Activated CD4-positive, alpha-beta T cell treated with anti-CD3 and anti-CD28 coated beads, Interleukin-2, amount 10 ng/mL, durations not matched to agents 24 days and 14 days (primary cell): ENCODE measurements at regions of chr10 and their contacts with region 1.

Region 1: GRCh38 chr10:112183329-112184051 is at the start of gene GPAM:
- DNase-seq: peak; percentile 100
- H3K4me3 Mint-ChIP-seq: peak within 1 kb of the TSS; percentile 88
- H3K27ac Mint-ChIP-seq: peak within 1 kb of the TSS; percentile 88
- H3K4me1 Mint-ChIP-seq: peaks cover 26% of the 10 kb centered on the region
- H3K27me3 Mint-ChIP-seq: peaks cover 11% of the 10 kb centered on the region
- total RNA-seq, gene GPAM: 8.6 and 9.8 TPM in 2 replicates

Region 2: GRCh38 chr10:112045938-112046337 is 137.6 kb before region 1 on chr10:
- intact Hi-C with region 1: no loop called
- DNase-seq: no peak
- H3K4me3 Mint-ChIP-seq: no peak overlapping the region
- H3K27ac Mint-ChIP-seq: no peak overlapping the region
- H3K4me1 Mint-ChIP-seq: no peaks in the 10 kb centered on the region
- H3K27me3 Mint-ChIP-seq: no peaks in the 10 kb centered on the region

Region 3: DNA sequence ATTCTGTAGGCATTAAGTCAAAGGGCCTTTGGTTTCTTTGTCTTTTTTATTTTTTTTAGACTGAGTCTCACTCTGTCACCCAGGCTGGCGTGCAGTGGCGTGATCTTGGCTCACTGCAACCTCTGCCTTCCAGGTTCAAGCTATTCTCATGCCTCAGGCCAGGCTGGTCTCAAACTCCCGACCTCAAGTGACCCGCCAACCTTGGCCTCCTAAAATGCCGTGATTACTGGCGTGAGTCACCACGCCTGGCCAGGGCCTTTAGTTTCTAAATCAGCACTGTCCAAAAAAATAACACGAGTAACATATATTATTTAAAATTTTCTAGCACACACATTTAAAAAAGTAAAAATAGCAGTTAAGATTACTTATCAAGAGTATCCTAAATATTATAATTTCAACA is 179.3 kb after region 1 on chr10:
- intact Hi-C with region 1: no loop called
- DNase-seq: no peak
- H3K4me3 Mint-ChIP-seq: no peak overlapping the region
- H3K27ac Mint-ChIP-seq: no peak overlapping the region
- H3K4me1 Mint-ChIP-seq: no peaks in the 10 kb centered on the region
- H3K27me3 Mint-ChIP-seq: peaks cover 9% of the 10 kb centered on the region

Region 4: DNA sequence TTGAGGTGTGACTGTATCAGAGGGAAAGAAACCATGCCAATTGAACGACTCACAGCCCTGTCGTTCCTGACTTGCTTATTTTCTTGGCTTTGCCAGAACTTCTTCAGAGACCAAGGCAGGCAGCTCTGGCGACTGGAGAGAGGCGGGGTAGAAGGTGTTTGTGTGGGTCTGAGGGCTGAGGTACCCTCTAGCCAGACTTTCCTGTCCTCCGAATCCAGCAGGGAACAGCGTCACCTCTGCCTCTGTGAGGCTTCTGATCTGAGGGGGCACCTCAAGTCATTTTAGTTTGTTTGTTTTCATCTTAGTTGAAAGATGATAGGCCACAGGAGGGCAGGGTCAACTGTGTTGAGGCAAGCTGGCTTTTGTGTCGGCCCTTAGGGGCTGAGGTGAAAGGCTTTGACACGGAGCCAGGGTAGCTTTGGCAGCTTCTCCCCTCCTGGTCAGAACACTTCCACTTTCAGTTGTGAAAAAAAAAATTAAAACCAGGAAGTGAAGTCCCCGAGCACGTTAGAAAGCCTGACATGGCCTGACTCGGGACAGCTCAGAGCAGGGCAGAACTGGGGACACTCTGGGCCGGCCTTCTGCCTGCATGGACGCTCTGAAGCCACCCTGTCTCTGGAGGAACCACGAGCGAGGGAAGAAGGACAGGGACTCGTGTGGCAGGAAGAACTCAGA is 192.4 kb after region 1 on chr10:
- intact Hi-C with region 1: loop called (anchors 2 kb)
- DNase-seq: peak; percentile 88
- H3K4me3 Mint-ChIP-seq: peak overlapping the region; percentile 100
- H3K27ac Mint-ChIP-seq: peak overlapping the region; percentile 100
- H3K4me1 Mint-ChIP-seq: peaks cover 52% of the 10 kb centered on the region
- H3K27me3 Mint-ChIP-seq: no peaks in the 10 kb centered on the region

Region 5: GRCh38 chr10:112434988-112435619 is 251.6 kb after region 1 on chr10:
- intact Hi-C with region 1: loop called (anchors 2 kb)
- DNase-seq: no peak
- H3K4me3 Mint-ChIP-seq: no peak overlapping the region
- H3K27ac Mint-ChIP-seq: no peak overlapping the region
- H3K4me1 Mint-ChIP-seq: no peaks in the 10 kb centered on the region
- H3K27me3 Mint-ChIP-seq: no peaks in the 10 kb centered on the region

Region 6: GRCh38 chr10:112532189-112532588 is 348.7 kb after region 1 on chr10:
- intact Hi-C with region 1: no loop called
- DNase-seq: peak; percentile 65
- H3K4me3 Mint-ChIP-seq: peak overlapping the region; percentile 64
- H3K27ac Mint-ChIP-seq: peak overlapping the region; percentile 37
- H3K4me1 Mint-ChIP-seq: peaks cover 30% of the 10 kb centered on the region
- H3K27me3 Mint-ChIP-seq: peaks cover 11% of the 10 kb centered on the region